BJ (cell line): ENCODE measurements at regions of chr12 and their contacts with region 1.

Region 1: DNA sequence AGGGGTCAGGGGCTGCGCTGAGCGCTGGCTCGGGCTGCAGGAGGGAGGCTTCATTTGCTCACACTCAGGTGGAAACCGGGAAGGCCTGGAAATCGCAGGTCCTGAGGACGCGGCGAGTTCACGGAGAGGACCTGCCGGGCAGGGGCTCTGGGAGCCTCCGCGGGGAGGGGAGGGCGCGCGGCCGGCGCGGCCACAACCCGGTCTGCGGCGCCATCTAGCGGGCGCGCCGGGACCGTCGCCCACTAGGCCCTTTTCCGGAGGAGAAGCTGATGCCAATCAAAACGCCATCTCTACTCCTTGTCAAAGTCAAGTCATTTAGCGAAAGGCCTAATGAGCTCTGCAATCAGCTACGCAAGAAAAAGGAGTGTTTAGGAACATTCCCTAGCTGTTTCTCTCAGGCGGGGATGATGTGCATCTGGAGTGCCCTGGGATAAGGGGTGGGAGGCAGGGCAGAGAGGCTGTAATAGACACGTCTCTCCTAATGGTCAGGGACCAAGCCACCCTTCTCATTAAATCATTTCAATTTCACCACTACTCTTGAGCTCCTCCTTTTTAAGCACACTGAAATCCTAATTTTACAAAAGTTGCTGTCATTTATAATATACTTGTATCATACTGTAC is 885.8 kb upstream of the TMEM132C start:
- DNase-seq: no peak
- H3K4me3 ChIP-seq: peak overlapping the region; percentile 31
- H3K27me3 ChIP-seq: no peaks in the 10 kb centered on the region
- CTCF ChIP-seq: peak; percentile 75

Region 2: DNA sequence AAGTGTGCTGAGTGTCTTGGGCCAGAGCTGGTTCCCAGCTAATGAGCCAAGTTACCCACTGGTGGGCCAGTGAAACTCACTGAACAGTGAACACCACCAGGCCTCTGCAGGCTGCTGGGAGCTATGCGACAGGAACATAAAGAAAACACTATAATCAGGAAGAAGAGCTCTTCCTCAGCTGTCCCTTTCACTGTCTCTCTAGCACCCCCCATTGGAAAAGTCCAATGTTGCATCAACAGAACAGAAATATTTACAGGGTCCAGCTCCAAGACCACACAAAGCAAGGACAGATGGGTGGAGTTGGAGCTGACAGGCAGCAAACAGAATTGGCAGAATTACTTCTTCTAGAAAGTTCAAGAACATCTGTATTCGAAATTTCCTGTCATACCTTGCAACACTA is 17.8 kb before region 1 on chr12:
- CTCF ChIA-PET with region 1: interaction called, 12 read pairs
- POLR2A ChIA-PET with region 1: no interaction called
- DNase-seq: no peak
- H3K4me3 ChIP-seq: no peak overlapping the region
- H3K27me3 ChIP-seq: no peaks in the 10 kb centered on the region
- CTCF ChIP-seq: peak; percentile 36; the same call in 1 of the 2 replicates

Region 3: DNA sequence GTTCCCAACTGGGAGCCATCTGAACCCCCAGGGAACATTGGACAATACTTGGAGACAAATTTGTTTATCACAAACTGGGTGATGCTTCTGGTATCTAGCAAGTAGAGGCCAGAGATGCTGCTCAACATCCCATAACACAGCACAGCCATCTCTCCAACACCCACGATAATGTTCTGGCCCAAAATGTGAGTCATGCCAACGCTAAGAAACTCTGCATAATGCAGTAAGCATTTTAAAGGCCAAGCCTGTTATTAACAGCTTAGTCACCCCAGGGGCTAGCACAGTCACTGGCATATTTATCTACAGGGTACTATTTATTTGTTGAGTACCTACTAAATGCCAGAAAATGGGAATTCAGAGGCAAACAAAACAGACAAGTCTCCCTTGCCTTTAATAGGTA is 12.7 kb after region 1 on chr12:
- CTCF ChIA-PET with region 1: interaction called, 26 read pairs
- POLR2A ChIA-PET with region 1: no interaction called
- DNase-seq: no peak
- H3K4me3 ChIP-seq: no peak overlapping the region
- H3K27me3 ChIP-seq: no peaks in the 10 kb centered on the region
- CTCF ChIP-seq: no peak